ENCODE measurements at regions of chr21 and their contacts with region 1.

Region 1: DNA sequence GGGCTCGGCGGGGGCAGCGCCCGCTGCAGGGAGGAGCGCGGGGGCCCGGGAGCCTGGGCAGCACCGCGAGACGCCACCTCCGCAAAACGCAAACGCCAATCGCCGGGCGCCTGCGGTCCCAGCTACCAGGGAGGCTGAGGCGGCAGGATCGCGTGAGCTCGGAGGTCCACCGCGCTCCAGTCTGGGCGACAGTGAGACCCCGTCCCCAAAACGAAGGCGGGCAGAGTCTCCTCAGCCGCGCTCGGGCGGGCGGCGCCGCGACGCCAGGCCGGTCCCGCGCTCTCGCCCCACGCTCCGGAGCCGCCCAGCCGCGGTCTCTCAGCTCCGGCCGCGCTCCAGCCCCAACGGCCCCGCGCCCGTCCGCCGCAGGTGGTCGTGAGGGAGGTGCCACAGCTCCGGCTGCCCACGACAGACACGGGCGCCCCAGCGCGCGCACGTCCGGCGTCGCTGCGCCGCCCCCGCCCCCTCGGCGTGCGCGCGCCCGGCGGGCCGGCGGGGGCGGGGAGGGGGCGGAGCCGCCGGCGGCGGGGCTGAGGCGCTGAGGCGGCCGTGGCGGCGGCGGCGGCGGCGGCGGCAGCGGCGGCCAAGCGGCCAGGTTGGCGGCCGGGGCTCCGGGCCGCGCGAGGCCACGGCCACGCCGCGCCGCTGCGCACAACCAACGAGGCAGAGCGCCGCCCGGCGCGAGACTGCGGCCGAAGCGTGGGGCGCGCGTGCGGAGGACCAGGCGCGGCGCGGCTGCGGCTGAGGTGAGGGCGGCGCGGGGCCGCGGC is at the start of gene ADARB1:
- DNase-seq: peak; percentile 56
- ATAC-seq: peak; percentile 78
- H3K4me3 ChIP-seq: peak within 1 kb of the TSS; percentile 100
- H3K27ac ChIP-seq: peak within 1 kb of the TSS; percentile 99
- H3K4me1 ChIP-seq: peaks cover 17% of the 10 kb centered on the region
- H3K27me3 ChIP-seq: no peaks in the 10 kb centered on the region
- CTCF ChIP-seq: no peak
- POLR2A ChIP-seq: peak; percentile 86
- RAD21 ChIP-seq: no peak
- total RNA-seq, gene ADARB1: 39.7 and 39.8 TPM in 2 replicates

Region 2: GRCh38 chr21:44742418-44743153 is 331.6 kb before region 1 on chr21:
- CTCF ChIA-PET with region 1: no interaction called
- POLR2A ChIA-PET with region 1: no interaction called
- dilution Hi-C with region 1: no loop called
- in situ Hi-C with region 1: no loop called
- intact Hi-C with region 1: no loop called
- DNase-seq: peak; percentile 4
- ATAC-seq: no peak
- H3K4me3 ChIP-seq: no peak overlapping the region
- H3K27ac ChIP-seq: no peak overlapping the region
- H3K4me1 ChIP-seq: no peaks in the 10 kb centered on the region
- H3K27me3 ChIP-seq: peaks cover 12% of the 10 kb centered on the region
- CTCF ChIP-seq: 0 out of 2 replicates have a peak, but pooled peaks have one; percentile 17
- POLR2A ChIP-seq: no peak
- RAD21 ChIP-seq: peak; percentile 23; the same call in 1 of the 2 replicates

Region 3: GRCh38 chr21:44991538-44992483 is 82.4 kb before region 1 on chr21:
- CTCF ChIA-PET with region 1: no interaction called
- POLR2A ChIA-PET with region 1: no interaction called
- dilution Hi-C with region 1: no loop called
- in situ Hi-C with region 1: no loop called
- intact Hi-C with region 1: loop called (anchors 2 kb)
- DNase-seq: peak; percentile 87
- ATAC-seq: peak; percentile 87
- H3K4me3 ChIP-seq: no peak overlapping the region
- H3K27ac ChIP-seq: peak overlapping the region; percentile 49
- H3K4me1 ChIP-seq: peaks cover 25% of the 10 kb centered on the region
- H3K27me3 ChIP-seq: peaks cover 39% of the 10 kb centered on the region
- CTCF ChIP-seq: peak; percentile 34
- POLR2A ChIP-seq: no peak
- RAD21 ChIP-seq: peak; percentile 40

Region 4: GRCh38 chr21:45130324-45130774 is 56.1 kb after region 1 on chr21:
- CTCF ChIA-PET with region 1: interaction called, 3 read pairs
- POLR2A ChIA-PET with region 1: no interaction called
- dilution Hi-C with region 1: no loop called
- in situ Hi-C with region 1: no loop called
- intact Hi-C with region 1: loop called (anchors 2 kb)
- DNase-seq: peak; percentile 84
- ATAC-seq: peak; percentile 82
- H3K4me3 ChIP-seq: peak overlapping the region; percentile 31
- H3K27ac ChIP-seq: peak overlapping the region; percentile 56
- H3K4me1 ChIP-seq: peaks cover 24% of the 10 kb centered on the region
- H3K27me3 ChIP-seq: no peaks in the 10 kb centered on the region
- CTCF ChIP-seq: no peak
- POLR2A ChIP-seq: no peak
- RAD21 ChIP-seq: no peak

Measured in IMR-90 (cell line).